ENCODE measurements at regions of chr17 and their contacts with region 1.

Region 1: GRCh38 chr17:66466840-66467367 is 164.5 kb downstream of the PRKCA start:
- DNase-seq: peak; percentile 97
- ATAC-seq: peak; percentile 95 to 98
- H3K4me3 ChIP-seq: peak overlapping the region; percentile 6; the same call in 2 of the 3 replicates
- H3K27ac ChIP-seq: peak overlapping the region; percentile 75 to 91
- H3K4me1 ChIP-seq: peaks cover 89% of the 10 kb centered on the region
- CTCF ChIP-seq: no peak
- EP300 ChIP-seq: peak in 1 of 2 experiments; percentile 81; a peak in 1 of 5 replicates
- POLR2A ChIP-seq: no peak
- RAD21 ChIP-seq: peak; percentile 45 to 57

Region 2: GRCh38 chr17:66445229-66445628 is 21.7 kb before region 1 on chr17:
- CTCF ChIA-PET with region 1: no interaction called
- POLR2A ChIA-PET with region 1: no interaction called
- DNase-seq: no peak
- ATAC-seq: no peak
- H3K4me3 ChIP-seq: no peak overlapping the region
- H3K27ac ChIP-seq: no peak overlapping the region
- H3K4me1 ChIP-seq: peaks cover 30% of the 10 kb centered on the region
- CTCF ChIP-seq: no peak
- EP300 ChIP-seq: no peak
- POLR2A ChIP-seq: no peak
- RAD21 ChIP-seq: no peak

Region 3: GRCh38 chr17:66508896-66509843 is 42.3 kb after region 1 on chr17:
- CTCF ChIA-PET with region 1: interaction called, 5 read pairs
- POLR2A ChIA-PET with region 1: interaction called, 17 read pairs
- DNase-seq: peak; percentile 87 to 97
- ATAC-seq: peak; percentile 86 to 90
- H3K4me3 ChIP-seq: peak overlapping the region; percentile 23
- H3K27ac ChIP-seq: peak overlapping the region; percentile 87 to 90
- H3K4me1 ChIP-seq: peaks cover 74% of the 10 kb centered on the region
- CTCF ChIP-seq: no peak
- EP300 ChIP-seq: peak; percentile 77 to 82; a peak in 3 of 5 replicates
- POLR2A ChIP-seq: no peak
- RAD21 ChIP-seq: peak; percentile 28 to 57

Measured in A549 (cell line).